Activated CD8-positive, alpha-beta T cell treated with anti-CD3 and anti-CD28 coated beads, Interleukin-2, amount 10 ng/mL, durations not matched to agents 7 days and 5 days (primary cell): ENCODE measurements at regions of chr1 and their contacts with region 1.

Region 1: GRCh38 chr1:119968068-119968492 is 71.8 kb upstream of the ADAM30 start:
- DNase-seq: peak; percentile 87
- ATAC-seq: peak; percentile 98
- H3K4me3 Mint-ChIP-seq: no peak overlapping the region
- H3K27ac Mint-ChIP-seq: peak overlapping the region; percentile 84
- H3K4me1 Mint-ChIP-seq: peaks cover 16% of the 10 kb centered on the region
- H3K27me3 Mint-ChIP-seq: no peaks in the 10 kb centered on the region

Region 2: DNA sequence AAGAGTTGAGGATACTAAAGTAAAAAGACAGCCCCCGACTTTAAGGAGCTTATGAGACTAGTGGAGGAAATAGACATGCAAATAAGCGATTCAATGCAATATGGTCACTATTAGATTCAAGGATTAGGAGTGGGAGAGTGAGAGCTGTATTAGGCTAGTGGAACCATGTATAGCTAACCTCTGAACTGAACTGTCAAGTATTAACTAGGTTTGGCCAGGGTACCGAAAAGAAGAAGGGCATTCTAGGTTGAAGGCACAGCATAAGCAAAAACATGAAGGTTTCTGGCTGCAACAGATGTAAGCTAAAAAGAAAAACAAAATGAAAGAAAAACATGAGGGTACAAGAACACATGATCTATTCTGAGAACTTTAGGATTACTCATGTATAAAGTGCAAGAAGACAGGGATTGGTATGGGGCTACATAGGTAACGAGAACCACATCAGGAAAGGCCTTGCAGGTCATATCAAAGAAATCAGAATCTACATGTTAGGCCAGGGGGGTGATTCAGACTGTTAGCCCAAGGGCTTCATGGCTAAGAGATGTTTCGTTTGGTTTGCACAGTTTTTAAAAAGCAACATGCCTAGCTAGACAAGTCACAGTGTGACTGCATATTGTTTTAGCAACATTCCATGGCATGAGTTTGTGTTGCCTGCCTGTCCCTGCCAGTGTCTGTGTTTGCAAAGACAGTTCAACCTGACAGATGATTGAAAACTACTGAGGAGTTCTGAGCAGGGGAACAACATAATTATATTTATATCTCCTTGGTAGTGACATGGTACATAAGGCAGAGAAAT is 653.9 kb before region 1 on chr1:
- CTCF ChIA-PET with region 1: no interaction called
- POLR2A ChIA-PET with region 1: no interaction called
- DNase-seq: no peak
- ATAC-seq: no peak
- H3K4me3 Mint-ChIP-seq: no peak overlapping the region
- H3K27ac Mint-ChIP-seq: no peak overlapping the region
- H3K4me1 Mint-ChIP-seq: peaks cover 2% of the 10 kb centered on the region
- H3K27me3 Mint-ChIP-seq: peaks cover 26% of the 10 kb centered on the region

Region 3: GRCh38 chr1:119948342-119949214 is 19.5 kb before region 1 on chr1:
- CTCF ChIA-PET with region 1: interaction called, 35 read pairs
- POLR2A ChIA-PET with region 1: no interaction called
- DNase-seq: peak; percentile 85
- ATAC-seq: peak; percentile 78
- H3K4me3 Mint-ChIP-seq: no peak overlapping the region
- H3K27ac Mint-ChIP-seq: peak overlapping the region; percentile 43
- H3K4me1 Mint-ChIP-seq: peaks cover 7% of the 10 kb centered on the region
- H3K27me3 Mint-ChIP-seq: no peaks in the 10 kb centered on the region

Region 4: DNA sequence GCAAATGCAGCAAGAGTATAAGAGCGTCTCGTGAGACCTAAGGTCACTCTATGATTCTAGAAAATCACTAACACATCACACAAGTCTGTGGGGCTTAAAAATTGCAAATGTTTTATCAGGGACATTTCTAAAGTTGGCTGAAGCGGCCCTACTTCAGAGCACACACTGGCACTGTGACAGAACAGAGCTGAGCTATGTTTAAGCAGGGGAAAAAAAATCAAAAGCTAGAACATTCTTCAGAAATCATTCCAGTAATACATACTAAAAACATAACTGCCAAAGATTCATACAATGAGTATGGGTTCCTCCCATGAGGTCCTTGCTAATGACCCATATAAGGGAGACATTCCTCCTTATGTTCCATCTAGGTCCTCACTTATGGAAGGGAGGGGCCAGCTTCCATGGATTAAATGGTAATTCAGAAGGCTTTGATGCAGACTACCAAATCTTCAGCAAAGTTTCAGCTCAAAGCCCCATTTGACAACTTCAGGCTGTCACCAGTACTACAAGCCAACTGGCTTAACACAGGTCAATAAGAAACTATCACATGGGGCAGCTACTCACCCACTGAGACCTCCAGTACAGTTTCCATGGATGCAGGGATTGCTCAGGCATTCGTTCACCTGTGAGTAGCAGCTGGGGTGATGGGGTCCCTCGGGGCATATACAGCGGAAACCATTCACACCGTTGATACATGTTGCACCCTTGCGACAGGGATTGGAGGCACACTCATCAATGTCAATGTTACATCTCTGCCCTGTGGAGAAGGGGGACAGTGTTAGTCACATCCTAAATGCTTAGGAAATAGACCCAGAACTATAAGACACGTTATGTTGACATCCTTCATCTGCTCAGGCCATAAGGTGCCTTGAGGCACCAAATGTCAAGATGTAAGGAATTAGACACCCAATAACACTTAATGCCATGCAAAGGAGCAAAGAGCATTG is 13.3 kb before region 1 on chr1:
- CTCF ChIA-PET with region 1: interaction called, 35 read pairs
- POLR2A ChIA-PET with region 1: no interaction called
- DNase-seq: no peak
- ATAC-seq: no peak
- H3K4me3 Mint-ChIP-seq: no peak overlapping the region
- H3K27ac Mint-ChIP-seq: no peak overlapping the region
- H3K4me1 Mint-ChIP-seq: peaks cover 38% of the 10 kb centered on the region
- H3K27me3 Mint-ChIP-seq: no peaks in the 10 kb centered on the region

Region 5: GRCh38 chr1:119987112-119987511 is 19.0 kb after region 1 on chr1:
- CTCF ChIA-PET with region 1: interaction called, 44 read pairs
- POLR2A ChIA-PET with region 1: no interaction called
- DNase-seq: no peak
- ATAC-seq: peak; percentile 26
- H3K4me3 Mint-ChIP-seq: peak overlapping the region; percentile 60
- H3K27ac Mint-ChIP-seq: peak overlapping the region; percentile 88
- H3K4me1 Mint-ChIP-seq: peaks cover 47% of the 10 kb centered on the region
- H3K27me3 Mint-ChIP-seq: no peaks in the 10 kb centered on the region